Heart left ventricle (tissue), 16 donors: ENCODE measurements at regions of chr16 and their contacts with region 1.

Region 1: GRCh38 chr16:58515125-58515870 is at the start of gene SETD6:
- DNase-seq: peak; percentile 88 to 94 (median 90)
- ATAC-seq: peak; percentile 76 to 92 (median 89)
- H3K4me3 ChIP-seq: peak within 1 kb of the TSS; percentile 69 to 89 (median 78)
- H3K27ac ChIP-seq: peak within 1 kb of the TSS; percentile 47 to 89 (median 80)
- H3K4me1 ChIP-seq: peaks cover 0 to 21% (median 15%) of the 10 kb centered on the region in 12 donors
- H3K27me3 ChIP-seq: no peaks in the 10 kb centered on the region
- CTCF ChIP-seq: peak in 5 of 12 donors; percentile 8 to 45 (median 21)
- POLR2A ChIP-seq: peak in 1 of 2 donors; percentile 48
- total RNA-seq, gene SETD6: 10.1 to 18.0 (median 14.3) TPM

Region 2: GRCh38 chr16:58577141-58577540 is 61.8 kb after region 1 on chr16:
- intact Hi-C with region 1: loop called in 2 of 10 experiments (anchors 5 to 10 kb)
- DNase-seq: no peak
- ATAC-seq: no peak
- H3K4me3 ChIP-seq: no peak overlapping the region
- H3K27ac ChIP-seq: no peak overlapping the region
- H3K4me1 ChIP-seq: peaks cover 0 to 13% (median 0%) of the 10 kb centered on the region in 12 donors
- H3K27me3 ChIP-seq: no peaks in the 10 kb centered on the region
- CTCF ChIP-seq: no peak
- POLR2A ChIP-seq: no peak

Region 3: GRCh38 chr16:58582971-58583765 is 67.9 kb after region 1 on chr16:
- intact Hi-C with region 1: loop called in 1 of 10 experiments (anchors 10 kb)
- DNase-seq: no peak
- ATAC-seq: peak in 1 of 4 donors; percentile 34
- H3K4me3 ChIP-seq: no peak overlapping the region
- H3K27ac ChIP-seq: no peak overlapping the region
- H3K4me1 ChIP-seq: peaks cover 0 to 10% (median 1%) of the 10 kb centered on the region in 12 donors
- H3K27me3 ChIP-seq: no peaks in the 10 kb centered on the region
- CTCF ChIP-seq: no peak
- POLR2A ChIP-seq: no peak

Region 4: DNA sequence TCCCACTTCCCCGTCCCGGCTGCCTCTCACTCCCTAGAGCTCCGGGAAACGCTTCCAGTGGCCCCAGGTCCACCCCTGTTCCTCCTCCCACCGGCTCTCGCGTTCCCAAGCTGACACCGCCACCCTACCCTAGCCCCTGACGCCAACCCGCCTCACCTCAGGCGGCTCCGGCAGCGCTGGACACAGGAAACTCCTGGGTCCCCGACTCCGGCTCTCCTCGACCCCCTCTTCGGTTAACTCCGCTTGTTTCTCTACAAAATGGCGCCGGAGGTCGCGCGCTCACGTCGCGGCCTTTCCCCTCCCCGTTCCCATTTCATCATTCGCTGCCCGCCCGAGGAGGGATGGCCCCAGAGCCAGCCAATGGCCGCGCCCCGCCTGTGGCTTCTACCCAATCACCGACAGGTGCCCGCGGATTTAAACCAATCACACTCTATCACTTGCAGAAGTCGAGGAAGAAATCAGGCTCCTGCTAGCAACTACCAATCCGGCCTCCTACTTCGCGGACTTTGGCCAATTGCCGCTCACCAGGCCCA is 114.3 kb after region 1 on chr16 and contains the start of gene CNOT1:
- intact Hi-C with region 1: loop called in 6 of 10 experiments (anchors 2 to 10 kb)
- DNase-seq: peak; percentile 98 to 99 (median 98)
- ATAC-seq: peak; percentile 93 to 96 (median 96)
- H3K4me3 ChIP-seq: peak within 1 kb of the TSS; percentile 66 to 99 (median 88)
- H3K27ac ChIP-seq: peak within 1 kb of the TSS; percentile 95 to 100 (median 98)
- H3K4me1 ChIP-seq: peaks cover 0 to 38% (median 23%) of the 10 kb centered on the region in 12 donors
- H3K27me3 ChIP-seq: no peaks in the 10 kb centered on the region
- CTCF ChIP-seq: no peak
- POLR2A ChIP-seq: peak in 1 of 2 donors; percentile 81
- total RNA-seq, gene CNOT1: 66.6 to 110 (median 82.5) TPM

Region 5: GRCh38 chr16:58638148-58639036 is 123.1 kb after region 1 on chr16:
- intact Hi-C with region 1: loop called in 2 of 10 experiments (anchors 5 to 10 kb)
- DNase-seq: peak in 4 of 5 donors; percentile 20 to 52 (median 36)
- ATAC-seq: peak; percentile 67 to 92 (median 84)
- H3K4me3 ChIP-seq: no peak overlapping the region
- H3K27ac ChIP-seq: peak overlapping the region in 1 of 12 donors; percentile 66
- H3K4me1 ChIP-seq: no peaks in the 10 kb centered on the region
- H3K27me3 ChIP-seq: no peaks in the 10 kb centered on the region
- CTCF ChIP-seq: peak; percentile 11 to 47 (median 30)
- POLR2A ChIP-seq: no peak

Region 6: GRCh38 chr16:58661199-58661830 is 146.0 kb after region 1 on chr16:
- intact Hi-C with region 1: loop called in 4 of 10 experiments (anchors 2 to 10 kb)
- DNase-seq: peak in 4 of 5 donors; percentile 43 to 78 (median 56)
- ATAC-seq: peak; percentile 78 to 92 (median 86)
- H3K4me3 ChIP-seq: no peak overlapping the region
- H3K27ac ChIP-seq: no peak overlapping the region
- H3K4me1 ChIP-seq: peaks cover 0 to 6% (median 0%) of the 10 kb centered on the region in 12 donors
- H3K27me3 ChIP-seq: no peaks in the 10 kb centered on the region
- CTCF ChIP-seq: peak; percentile 35 to 71 (median 58)
- POLR2A ChIP-seq: no peak

Region 7: DNA sequence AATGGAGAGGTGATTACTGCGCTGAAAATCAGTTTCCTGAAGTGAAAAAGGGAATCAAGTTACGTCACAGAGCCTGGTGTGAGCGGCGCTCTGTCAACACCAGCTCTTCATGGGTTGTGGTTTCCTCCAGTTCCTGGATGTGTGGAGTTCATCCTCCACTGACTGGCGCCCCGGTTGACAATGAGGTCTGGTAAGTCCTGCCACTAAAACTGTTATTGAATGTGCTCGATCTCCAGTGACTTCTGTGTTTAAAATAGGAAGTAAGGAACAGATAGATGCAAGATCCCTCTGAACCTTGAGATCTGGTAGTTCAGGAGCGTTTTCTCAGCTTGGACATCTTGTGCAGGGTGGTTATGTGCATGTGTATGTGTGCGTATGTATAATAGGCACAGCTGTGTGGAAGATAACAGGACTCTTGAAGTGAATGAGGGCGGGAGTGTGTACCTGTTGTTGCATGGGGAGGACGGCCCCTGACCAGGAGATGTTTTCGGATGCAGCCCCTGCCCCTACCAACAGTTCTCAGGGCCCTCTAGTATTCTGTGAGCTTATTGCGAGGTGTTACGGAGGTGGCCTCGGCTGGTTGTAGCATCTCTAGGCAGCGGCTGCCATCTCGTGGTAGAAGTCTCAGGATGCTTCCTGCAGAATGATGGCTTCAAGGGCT is 240.8 kb after region 1 on chr16:
- intact Hi-C with region 1: loop called in 2 of 10 experiments (anchors 5 to 10 kb)
- DNase-seq: peak; percentile 57 to 75 (median 69)
- ATAC-seq: peak; percentile 84 to 96 (median 91)
- H3K4me3 ChIP-seq: peak overlapping the region in 1 of 12 donors; percentile 11
- H3K27ac ChIP-seq: peak overlapping the region in 1 of 12 donors; percentile 28
- H3K4me1 ChIP-seq: peaks cover 0 to 9% (median 0%) of the 10 kb centered on the region in 12 donors
- H3K27me3 ChIP-seq: no peaks in the 10 kb centered on the region
- CTCF ChIP-seq: peak in 11 of 12 donors; percentile 49 to 79 (median 64)
- POLR2A ChIP-seq: no peak